ENCODE measurements at regions of chr19 and their contacts with region 1.

Region 1: GRCh38 chr19:14136509-14137281 is at the start of gene ASF1B:
- DNase-seq: peak; percentile 100
- ATAC-seq: peak; percentile 89
- H3K4me3 ChIP-seq: peak within 1 kb of the TSS; percentile 83
- H3K27ac ChIP-seq: peak within 1 kb of the TSS; percentile 81
- H3K4me1 ChIP-seq: peaks cover 20% of the 10 kb centered on the region
- H3K27me3 ChIP-seq: no peaks in the 10 kb centered on the region
- CTCF ChIP-seq: peak; percentile 82
- total RNA-seq, gene ASF1B: 71.2 and 84.7 TPM in 2 replicates

Region 2: GRCh38 chr19:13909430-13909829 is 227.3 kb before region 1 on chr19:
- CTCF ChIA-PET with region 1: no interaction called
- POLR2A ChIA-PET with region 1: no interaction called
- intact Hi-C with region 1: no loop called
- DNase-seq: no peak
- ATAC-seq: no peak
- H3K4me3 ChIP-seq: no peak overlapping the region
- H3K27ac ChIP-seq: no peak overlapping the region
- H3K4me1 ChIP-seq: peaks cover 11% of the 10 kb centered on the region
- H3K27me3 ChIP-seq: no peaks in the 10 kb centered on the region
- CTCF ChIP-seq: no peak

Region 3: GRCh38 chr19:14015524-14016035 is 121.1 kb before region 1 on chr19:
- CTCF ChIA-PET with region 1: no interaction called
- POLR2A ChIA-PET with region 1: no interaction called
- intact Hi-C with region 1: no loop called
- DNase-seq: no peak
- ATAC-seq: no peak
- H3K4me3 ChIP-seq: no peak overlapping the region
- H3K27ac ChIP-seq: no peak overlapping the region
- H3K4me1 ChIP-seq: no peaks in the 10 kb centered on the region
- H3K27me3 ChIP-seq: no peaks in the 10 kb centered on the region
- CTCF ChIP-seq: no peak

Region 4: DNA sequence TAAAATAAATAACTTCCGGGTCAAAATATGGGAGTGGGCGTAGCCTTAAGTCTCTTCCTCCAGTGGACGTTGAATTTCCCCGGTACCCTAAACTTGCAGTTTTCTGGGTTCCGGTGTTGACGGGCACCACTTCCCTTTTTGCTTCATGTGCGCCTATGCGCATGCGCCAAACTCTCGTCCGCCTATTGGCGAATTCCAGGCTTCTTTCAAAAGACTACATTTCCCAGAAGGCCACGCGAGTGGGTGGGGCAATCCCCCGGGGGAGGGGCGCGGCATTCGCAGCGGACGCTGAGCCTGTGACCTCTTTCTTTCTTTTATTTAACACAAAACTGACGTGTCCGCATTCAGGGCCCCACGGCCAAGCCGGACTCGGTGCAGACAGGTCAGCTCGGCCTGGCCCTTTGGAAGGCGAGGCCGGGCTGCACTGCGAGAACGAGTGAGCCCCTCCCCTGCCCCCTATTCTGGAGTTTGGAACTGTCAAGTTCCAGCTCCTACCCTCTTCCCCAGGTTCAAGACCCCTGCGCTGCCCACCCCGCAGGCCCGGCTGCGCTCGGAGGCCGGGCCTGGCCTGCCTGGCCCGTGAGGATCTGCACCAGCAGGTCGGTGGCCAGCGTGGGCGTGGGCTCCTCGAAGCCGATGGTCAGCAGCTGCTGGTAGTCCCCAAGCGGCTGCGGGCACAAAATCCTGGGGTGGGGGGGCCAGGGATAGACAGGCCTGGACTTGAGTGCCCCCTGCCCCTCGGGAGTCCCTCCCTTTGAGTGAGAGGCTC is 55.2 kb before region 1 on chr19:
- CTCF ChIA-PET with region 1: no interaction called
- POLR2A ChIA-PET with region 1: interaction called, 5 read pairs
- intact Hi-C with region 1: loop called (anchors 2 kb)
- DNase-seq: peak; percentile 100
- ATAC-seq: peak; percentile 93
- H3K4me3 ChIP-seq: peak overlapping the region; percentile 87
- H3K27ac ChIP-seq: peak overlapping the region; percentile 31
- H3K4me1 ChIP-seq: peaks cover 15% of the 10 kb centered on the region
- H3K27me3 ChIP-seq: no peaks in the 10 kb centered on the region
- CTCF ChIP-seq: no peak

Region 5: DNA sequence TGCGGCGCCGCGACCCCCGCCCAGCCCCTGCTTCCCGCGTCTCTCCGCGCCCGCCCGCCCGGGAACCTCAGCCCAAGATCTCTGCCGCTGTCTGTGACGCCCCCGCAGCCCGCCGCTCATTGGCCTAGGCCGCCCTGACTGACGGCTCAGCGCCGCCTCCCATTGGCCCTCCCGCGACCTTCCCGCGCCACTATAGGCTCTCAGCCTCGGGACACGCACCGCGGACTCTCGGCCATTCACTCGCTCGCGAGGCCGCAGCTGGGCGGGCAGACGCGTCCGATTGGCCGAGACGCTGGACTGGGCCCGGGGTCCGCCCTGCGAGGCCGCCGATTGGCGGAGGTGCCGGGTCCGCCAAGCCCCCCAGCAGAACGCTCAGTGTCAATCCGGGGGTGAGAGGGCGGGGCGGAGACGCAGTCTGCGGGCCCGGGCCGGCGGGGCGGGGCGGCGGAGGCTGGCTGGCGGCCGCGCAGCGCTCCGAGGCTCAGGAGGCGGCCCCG is 19.0 kb before region 1 on chr19 and contains the start of gene PRKACA:
- CTCF ChIA-PET with region 1: interaction called, 10 read pairs
- POLR2A ChIA-PET with region 1: interaction called, 9 read pairs
- intact Hi-C with region 1: no loop called
- DNase-seq: peak; percentile 99
- ATAC-seq: peak; percentile 96
- H3K4me3 ChIP-seq: peak within 1 kb of the TSS; percentile 78
- H3K27ac ChIP-seq: peak within 1 kb of the TSS; percentile 30; the same call in 1 of the 2 replicates
- H3K4me1 ChIP-seq: peaks cover 17% of the 10 kb centered on the region
- H3K27me3 ChIP-seq: no peaks in the 10 kb centered on the region
- CTCF ChIP-seq: no peak
- total RNA-seq, gene PRKACA: 50.2 and 72.9 TPM in 2 replicates

Region 6: GRCh38 chr19:14167576-14168138 is 31.0 kb after region 1 on chr19:
- CTCF ChIA-PET with region 1: no interaction called
- POLR2A ChIA-PET with region 1: no interaction called
- intact Hi-C with region 1: no loop called
- DNase-seq: no peak
- ATAC-seq: no peak
- H3K4me3 ChIP-seq: no peak overlapping the region
- H3K27ac ChIP-seq: no peak overlapping the region
- H3K4me1 ChIP-seq: no peaks in the 10 kb centered on the region
- H3K27me3 ChIP-seq: no peaks in the 10 kb centered on the region
- CTCF ChIP-seq: no peak

Region 7: DNA sequence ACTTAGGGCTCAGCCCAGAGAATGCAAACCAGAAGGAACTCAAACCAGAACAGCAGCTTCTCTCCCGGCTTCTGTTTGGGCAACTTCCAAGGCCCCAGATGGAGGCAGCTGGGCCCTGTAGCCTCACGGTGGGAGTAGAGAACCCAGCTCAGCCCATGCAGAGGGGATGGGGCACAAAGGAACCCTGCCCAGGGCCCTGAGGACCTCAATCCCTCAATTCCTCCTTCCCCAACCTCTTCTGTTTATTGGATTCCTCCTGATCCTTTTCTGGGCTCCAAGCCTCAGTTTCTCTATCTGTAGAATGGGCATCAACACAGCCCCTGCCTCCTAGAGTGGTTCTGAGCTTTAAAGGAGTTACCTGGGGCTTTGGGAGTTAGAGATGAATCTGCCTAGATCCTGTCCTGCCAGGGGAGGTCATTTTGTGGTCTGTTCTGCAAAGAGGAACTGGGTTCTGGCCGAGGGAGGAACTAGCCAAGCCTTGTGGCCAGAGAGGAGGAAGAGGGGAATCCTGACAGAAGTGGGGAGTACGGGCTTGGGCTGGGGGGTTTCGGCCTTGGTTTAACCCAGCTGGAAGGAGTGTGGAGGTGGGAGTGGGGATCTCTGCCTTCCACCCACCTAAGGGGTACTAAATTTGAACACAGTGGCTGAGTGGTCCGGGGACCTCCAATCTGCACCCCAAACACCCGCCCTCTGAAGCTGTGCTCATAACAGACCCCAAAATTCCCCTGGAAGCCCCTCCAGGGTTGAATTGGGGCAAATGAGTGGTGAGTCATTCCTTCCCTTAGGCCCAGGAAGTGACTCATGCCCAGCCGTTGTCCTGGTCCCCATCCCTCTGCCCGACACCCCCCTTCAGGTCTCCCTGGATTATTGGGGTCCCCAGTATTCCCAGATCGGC is 247.2 kb after region 1 on chr19:
- CTCF ChIA-PET with region 1: interaction called, 5 read pairs
- POLR2A ChIA-PET with region 1: no interaction called
- intact Hi-C with region 1: loop called (anchors 10 kb)
- DNase-seq: peak; percentile 56
- ATAC-seq: peak; percentile 7; the same call in 1 of the 2 replicates
- H3K4me3 ChIP-seq: peak overlapping the region; percentile 73
- H3K27ac ChIP-seq: peak overlapping the region; percentile 48
- H3K4me1 ChIP-seq: peaks cover 36% of the 10 kb centered on the region
- H3K27me3 ChIP-seq: no peaks in the 10 kb centered on the region
- CTCF ChIP-seq: no peak

Region 8: DNA sequence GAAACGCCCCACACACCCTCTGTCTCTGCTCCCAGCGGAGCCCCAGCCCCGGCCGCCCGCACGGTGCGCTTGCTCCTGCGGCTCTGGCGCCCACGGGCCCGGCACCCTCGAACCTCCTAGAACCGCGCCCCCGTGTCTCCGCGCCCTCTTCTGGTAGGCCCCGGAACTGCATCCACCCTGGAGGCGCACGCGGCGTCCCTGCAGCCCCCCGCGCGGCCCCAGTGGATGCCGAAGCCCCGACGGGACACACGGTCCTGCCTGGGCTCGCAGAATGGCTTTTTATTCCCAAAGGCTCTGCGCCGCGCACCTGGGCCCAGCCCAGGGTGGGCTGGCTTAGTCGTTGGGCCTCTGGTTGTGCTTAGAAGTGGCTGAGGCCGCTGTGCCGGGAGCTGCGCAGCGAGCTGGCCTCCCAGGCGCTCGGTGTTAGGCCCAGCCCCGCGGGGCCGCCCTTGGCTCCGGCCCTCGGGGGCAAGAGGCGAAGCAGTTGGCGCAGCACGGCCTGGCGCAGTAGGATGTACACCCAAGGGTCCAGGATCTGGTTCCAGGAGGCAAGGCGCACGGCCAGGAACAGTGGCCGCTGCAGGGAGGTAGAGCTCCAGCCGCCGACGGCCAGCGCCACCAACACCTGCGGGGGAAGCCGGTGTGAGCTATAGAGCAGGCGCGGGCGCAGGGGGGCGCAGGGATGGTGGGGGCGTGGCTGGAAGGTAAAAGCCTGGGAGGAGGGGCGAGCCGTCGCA is 335.7 kb after region 1 on chr19:
- CTCF ChIA-PET with region 1: interaction called, 5 read pairs
- POLR2A ChIA-PET with region 1: no interaction called
- intact Hi-C with region 1: loop called (anchors 10 kb)
- DNase-seq: peak; percentile 72
- ATAC-seq: peak; percentile 7; the same call in 1 of the 2 replicates
- H3K4me3 ChIP-seq: peak overlapping the region; percentile 50
- H3K27ac ChIP-seq: no peak overlapping the region
- H3K4me1 ChIP-seq: peaks cover 29% of the 10 kb centered on the region
- H3K27me3 ChIP-seq: no peaks in the 10 kb centered on the region
- CTCF ChIP-seq: peak; percentile 96